HepG2 (cell line): ENCODE measurements at regions of chr5 and their contacts with region 1.

Region 1: DNA sequence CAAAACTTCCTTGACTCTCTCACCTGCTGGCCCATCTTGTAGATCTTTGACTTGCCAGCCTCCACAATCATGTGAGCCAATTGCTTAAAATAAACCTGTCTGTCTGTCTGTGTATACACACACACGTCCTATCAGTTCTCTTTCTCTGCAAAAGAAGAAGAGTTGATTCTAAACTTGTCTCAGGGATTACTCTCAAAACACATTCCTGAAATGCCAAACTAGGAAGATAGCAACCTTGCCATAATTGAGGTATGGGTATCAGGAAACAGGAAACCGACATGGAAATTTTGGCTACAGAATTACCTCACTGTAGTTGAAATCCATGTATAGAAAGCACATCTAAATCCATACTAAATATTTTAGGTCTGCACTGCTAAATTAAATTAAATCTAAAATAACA is 483.4 kb downstream of the PLK2 start:
- DNase-seq: no peak
- ATAC-seq: no peak
- H3K4me3 ChIP-seq: no peak overlapping the region
- H3K27ac ChIP-seq: no peak overlapping the region
- H3K4me1 ChIP-seq: no peaks in the 10 kb centered on the region
- H3K27me3 ChIP-seq: no peaks in the 10 kb centered on the region
- CTCF ChIP-seq: no peak
- EP300 ChIP-seq: no peak
- POLR2A ChIP-seq: no peak
- RAD21 ChIP-seq: no peak

Region 2: GRCh38 chr5:57844410-57844809 is 132.1 kb before region 1 on chr5:
- CTCF ChIA-PET with region 1: no interaction called
- POLR2A ChIA-PET with region 1: no interaction called
- in situ Hi-C with region 1: no loop called
- intact Hi-C with region 1: no loop called
- DNase-seq: no peak
- ATAC-seq: no peak
- H3K4me3 ChIP-seq: no peak overlapping the region
- H3K27ac ChIP-seq: no peak overlapping the region
- H3K4me1 ChIP-seq: no peaks in the 10 kb centered on the region
- H3K27me3 ChIP-seq: no peaks in the 10 kb centered on the region; a peak in 1 of 5 replicates
- CTCF ChIP-seq: no peak
- EP300 ChIP-seq: no peak
- POLR2A ChIP-seq: no peak
- RAD21 ChIP-seq: no peak

Region 3: GRCh38 chr5:57932776-57933175 is 43.7 kb before region 1 on chr5:
- CTCF ChIA-PET with region 1: no interaction called
- POLR2A ChIA-PET with region 1: no interaction called
- in situ Hi-C with region 1: no loop called
- intact Hi-C with region 1: no loop called
- DNase-seq: no peak
- ATAC-seq: no peak
- H3K4me3 ChIP-seq: no peak overlapping the region
- H3K27ac ChIP-seq: no peak overlapping the region
- H3K4me1 ChIP-seq: no peaks in the 10 kb centered on the region
- H3K27me3 ChIP-seq: no peaks in the 10 kb centered on the region; a peak in 1 of 5 replicates
- CTCF ChIP-seq: no peak
- EP300 ChIP-seq: no peak
- POLR2A ChIP-seq: no peak
- RAD21 ChIP-seq: no peak

Region 4: GRCh38 chr5:57953792-57954191 is 22.7 kb before region 1 on chr5:
- CTCF ChIA-PET with region 1: no interaction called
- POLR2A ChIA-PET with region 1: no interaction called
- in situ Hi-C with region 1: no loop called
- intact Hi-C with region 1: loop called (anchors 1 kb)
- DNase-seq: no peak
- ATAC-seq: no peak
- H3K4me3 ChIP-seq: no peak overlapping the region
- H3K27ac ChIP-seq: no peak overlapping the region
- H3K4me1 ChIP-seq: no peaks in the 10 kb centered on the region
- H3K27me3 ChIP-seq: no peaks in the 10 kb centered on the region
- CTCF ChIP-seq: no peak
- EP300 ChIP-seq: no peak
- POLR2A ChIP-seq: no peak
- RAD21 ChIP-seq: no peak

Region 5: GRCh38 chr5:58211441-58211840 is 234.9 kb after region 1 on chr5:
- CTCF ChIA-PET with region 1: no interaction called
- POLR2A ChIA-PET with region 1: no interaction called
- in situ Hi-C with region 1: no loop called
- intact Hi-C with region 1: no loop called
- DNase-seq: no peak
- ATAC-seq: no peak
- H3K4me3 ChIP-seq: no peak overlapping the region
- H3K27ac ChIP-seq: no peak overlapping the region
- H3K4me1 ChIP-seq: no peaks in the 10 kb centered on the region
- H3K27me3 ChIP-seq: no peaks in the 10 kb centered on the region
- CTCF ChIP-seq: no peak
- EP300 ChIP-seq: no peak
- POLR2A ChIP-seq: no peak
- RAD21 ChIP-seq: no peak